ENCODE measurements at regions of chr9 and their contacts with region 1.

Region 1: DNA sequence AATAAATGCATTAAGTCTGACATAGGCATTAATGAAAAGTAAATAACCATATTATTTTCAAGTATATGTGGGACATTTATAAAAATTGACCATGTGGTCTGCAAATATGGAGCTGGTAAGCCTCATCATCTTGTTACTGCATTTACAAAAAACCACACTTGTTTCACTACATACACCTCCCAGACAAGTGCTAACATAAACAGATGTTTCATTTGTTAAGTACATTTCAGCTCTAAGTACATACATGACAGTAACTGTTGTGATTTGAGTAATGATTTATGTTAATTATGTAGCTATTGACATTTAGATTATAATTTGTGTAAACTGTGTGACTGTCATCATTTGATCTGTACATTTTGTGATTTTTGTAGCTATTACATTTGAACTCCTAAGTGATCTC is 13.9 kb downstream of the IDNK start:
- DNase-seq: no peak
- H3K4me3 ChIP-seq: no peak overlapping the region
- H3K27ac ChIP-seq: no peak overlapping the region
- H3K4me1 ChIP-seq: no peaks in the 10 kb centered on the region
- H3K27me3 ChIP-seq: no peaks in the 10 kb centered on the region
- CTCF ChIP-seq: no peak
- POLR2A ChIP-seq: no peak

Region 2: GRCh38 chr9:83649080-83649479 is 12.3 kb after region 1 on chr9:
- CTCF ChIA-PET with region 1: interaction called, 24 read pairs
- POLR2A ChIA-PET with region 1: no interaction called
- dilution Hi-C with region 1: no loop called
- intact Hi-C with region 1: no loop called
- DNase-seq: peak; percentile 32
- H3K4me3 ChIP-seq: no peak overlapping the region
- H3K27ac ChIP-seq: no peak overlapping the region
- H3K4me1 ChIP-seq: no peaks in the 10 kb centered on the region
- H3K27me3 ChIP-seq: no peaks in the 10 kb centered on the region
- CTCF ChIP-seq: peak; percentile 70 to 77
- POLR2A ChIP-seq: no peak

Measured in endothelial cell of umbilical vein (primary cell).